Activated naive CD4-positive, alpha-beta T cell treated with anti-CD3 and anti-CD28 coated beads for 36 hours (primary cell): ENCODE measurements at regions of chr1 and their contacts with region 1.

Region 1: DNA sequence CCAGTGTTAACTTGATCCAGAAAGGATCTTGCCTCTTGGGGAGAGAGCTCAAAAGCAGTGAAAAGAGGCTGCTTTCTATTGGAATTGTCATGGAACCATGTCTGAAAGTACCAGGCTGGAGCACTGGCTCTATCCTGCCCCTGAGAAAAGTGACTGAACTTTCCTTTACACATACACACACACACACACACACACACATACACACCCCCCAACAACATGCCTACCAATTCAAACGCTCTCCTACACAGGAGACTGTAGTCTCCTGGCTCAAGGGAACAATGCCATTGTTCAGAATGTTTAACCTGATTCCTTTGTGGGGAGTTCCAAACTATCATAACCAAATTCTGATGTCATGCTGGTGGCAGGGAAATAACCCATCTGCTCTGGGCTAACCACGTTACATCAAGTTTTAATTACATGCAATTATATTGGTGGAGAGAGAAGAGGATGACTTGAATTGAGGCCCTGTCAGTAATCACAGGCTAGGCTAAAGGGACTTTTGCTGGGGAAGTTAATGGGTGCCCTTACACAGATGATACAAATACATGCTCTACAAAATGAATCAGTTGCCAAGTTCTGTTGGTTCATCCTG is 52.3 kb upstream of the DUSP10 start:
- DNase-seq: peak; percentile 73
- H3K4me3 Mint-ChIP-seq: peak overlapping the region; percentile 17
- H3K27ac Mint-ChIP-seq: peak overlapping the region; percentile 88
- H3K4me1 Mint-ChIP-seq: peaks cover 40% of the 10 kb centered on the region
- H3K27me3 Mint-ChIP-seq: no peaks in the 10 kb centered on the region

Region 2: DNA sequence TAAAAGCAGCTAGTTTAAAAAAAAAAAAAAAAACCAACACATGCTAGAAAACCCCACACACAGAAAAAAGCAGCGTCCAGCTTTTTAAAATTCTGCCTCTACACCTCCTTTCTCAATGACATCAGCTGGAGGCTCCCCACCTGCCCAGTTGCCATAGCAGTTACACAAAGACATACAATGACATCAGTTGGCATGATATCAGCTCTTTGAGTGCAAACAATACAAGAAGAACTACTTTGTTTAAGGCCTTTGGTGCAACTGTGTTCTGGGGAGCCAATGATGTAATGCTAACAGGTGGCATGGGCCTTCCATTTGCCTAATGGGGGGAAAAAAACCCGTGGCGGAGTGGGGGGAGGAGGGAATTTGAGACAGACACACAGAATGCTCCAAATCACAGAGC is 85.2 kb before region 1 on chr1:
- CTCF ChIA-PET with region 1: no interaction called
- intact Hi-C with region 1: loop called (anchors 1 kb)
- DNase-seq: peak; percentile 42
- H3K4me3 Mint-ChIP-seq: no peak overlapping the region
- H3K27ac Mint-ChIP-seq: no peak overlapping the region
- H3K4me1 Mint-ChIP-seq: peaks cover 53% of the 10 kb centered on the region
- H3K27me3 Mint-ChIP-seq: no peaks in the 10 kb centered on the region

Region 3: DNA sequence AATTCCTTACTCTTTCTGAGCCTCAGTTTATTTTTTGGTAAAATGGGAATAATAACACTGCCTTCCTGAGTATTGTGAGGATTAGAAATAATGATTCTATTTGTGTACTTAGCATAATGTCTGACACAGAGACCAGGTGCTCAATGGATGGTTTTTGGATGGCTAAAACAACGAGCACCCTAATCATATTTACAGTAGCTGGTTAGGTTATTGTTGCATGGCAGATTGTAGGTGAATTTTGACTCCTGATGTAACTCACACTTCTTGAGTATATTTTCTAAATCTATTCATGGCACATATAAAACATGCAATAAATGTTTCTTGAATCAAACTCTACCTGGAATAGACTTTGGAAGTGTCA is 40.4 kb before region 1 on chr1:
- CTCF ChIA-PET with region 1: no interaction called
- intact Hi-C with region 1: loop called (anchors 1 kb)
- DNase-seq: no peak
- H3K4me3 Mint-ChIP-seq: no peak overlapping the region
- H3K27ac Mint-ChIP-seq: peak overlapping the region; percentile 82
- H3K4me1 Mint-ChIP-seq: peaks cover 37% of the 10 kb centered on the region
- H3K27me3 Mint-ChIP-seq: peaks cover 2% of the 10 kb centered on the region

Region 4: GRCh38 chr1:221783936-221784335 is 10.2 kb before region 1 on chr1:
- CTCF ChIA-PET with region 1: interaction called, 10 read pairs
- intact Hi-C with region 1: loop called (anchors 1 kb)
- DNase-seq: peak; percentile 24
- H3K4me3 Mint-ChIP-seq: no peak overlapping the region
- H3K27ac Mint-ChIP-seq: no peak overlapping the region
- H3K4me1 Mint-ChIP-seq: peaks cover 43% of the 10 kb centered on the region
- H3K27me3 Mint-ChIP-seq: no peaks in the 10 kb centered on the region

Region 5: GRCh38 chr1:221824025-221824424 is 29.9 kb after region 1 on chr1:
- CTCF ChIA-PET with region 1: no interaction called
- intact Hi-C with region 1: loop called (anchors 1 kb)
- DNase-seq: peak; percentile 51
- H3K4me3 Mint-ChIP-seq: no peak overlapping the region
- H3K27ac Mint-ChIP-seq: peak overlapping the region; percentile 27
- H3K4me1 Mint-ChIP-seq: peaks cover 47% of the 10 kb centered on the region
- H3K27me3 Mint-ChIP-seq: peaks cover 4% of the 10 kb centered on the region

Region 6: GRCh38 chr1:221839796-221840395 is 45.7 kb after region 1 on chr1:
- CTCF ChIA-PET with region 1: interaction called, 3 read pairs
- intact Hi-C with region 1: loop called (anchors 1 kb)
- DNase-seq: peak; percentile 87
- H3K4me3 Mint-ChIP-seq: no peak overlapping the region
- H3K27ac Mint-ChIP-seq: peak overlapping the region; percentile 9
- H3K4me1 Mint-ChIP-seq: peaks cover 35% of the 10 kb centered on the region
- H3K27me3 Mint-ChIP-seq: peaks cover 5% of the 10 kb centered on the region

Region 7: DNA sequence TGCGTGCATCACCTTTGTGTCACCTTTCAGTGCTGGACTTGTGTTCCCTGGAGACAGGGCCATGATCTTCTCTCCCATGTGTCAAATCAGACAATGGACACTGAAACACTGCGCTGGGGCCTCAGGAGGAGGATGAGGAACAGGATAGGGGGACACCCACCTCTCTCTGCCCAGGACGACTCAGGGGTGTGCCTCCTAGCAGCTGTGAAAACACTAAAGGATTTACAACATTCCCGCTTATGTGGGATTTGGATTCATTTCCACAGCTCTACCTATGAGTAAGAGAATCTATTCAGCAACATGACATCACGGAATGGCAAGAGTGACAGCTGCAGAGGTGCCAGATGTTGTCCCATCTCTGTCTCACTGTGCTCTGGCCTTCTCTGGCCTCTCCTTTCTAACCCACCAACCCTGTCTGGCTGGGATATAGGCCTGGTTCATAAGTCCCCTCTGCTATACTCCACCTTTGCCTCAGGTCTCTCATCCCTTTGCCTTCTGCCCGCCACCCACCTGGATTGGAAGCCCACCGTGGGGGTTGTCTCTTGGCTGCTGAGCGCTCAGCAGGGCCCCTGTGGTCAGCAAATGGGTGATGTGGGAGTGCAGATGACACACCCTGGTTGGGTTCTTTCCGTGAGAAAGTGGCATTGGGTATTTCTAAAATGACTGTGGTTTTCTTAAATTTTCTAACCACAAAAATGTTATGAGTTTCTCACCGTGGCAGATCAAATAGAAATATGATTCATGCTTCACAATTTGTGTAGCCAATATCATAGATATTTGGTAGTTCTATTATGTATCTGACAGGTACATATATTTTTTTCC is 1395.9 kb after region 1 on chr1:
- CTCF ChIA-PET with region 1: no interaction called
- intact Hi-C with region 1: loop called (anchors 1 kb)
- DNase-seq: peak; percentile 76
- H3K4me3 Mint-ChIP-seq: no peak overlapping the region
- H3K27ac Mint-ChIP-seq: peak overlapping the region; percentile 67
- H3K4me1 Mint-ChIP-seq: peaks cover 41% of the 10 kb centered on the region
- H3K27me3 Mint-ChIP-seq: peaks cover 9% of the 10 kb centered on the region